ENCODE measurements at regions of chr12 and their contacts with region 1.

Region 1: GRCh38 chr12:15011162-15011561 is 38.3 kb downstream of the PDE6H start:
- DNase-seq: no peak
- ATAC-seq: no peak
- H3K4me3 ChIP-seq: no peak overlapping the region
- H3K4me3 Mint-ChIP-seq: no peak overlapping the region
- H3K27ac ChIP-seq: no peak overlapping the region
- H3K27ac Mint-ChIP-seq: no peak overlapping the region
- H3K4me1 ChIP-seq: peaks cover 3% of the 10 kb centered on the region
- H3K4me1 Mint-ChIP-seq: no peaks in the 10 kb centered on the region
- H3K27me3 ChIP-seq: peaks cover 0 to 9% of the 10 kb centered on the region in 2 experiments
- H3K27me3 Mint-ChIP-seq: peaks cover 23% of the 10 kb centered on the region
- CTCF ChIP-seq: peak; percentile 33

Region 2: GRCh38 chr12:14892726-14893505 is 118.2 kb before region 1 on chr12:
- CTCF ChIA-PET with region 1: no interaction called
- POLR2A ChIA-PET with region 1: no interaction called
- intact Hi-C with region 1: no loop called
- DNase-seq: no peak
- ATAC-seq: no peak
- H3K4me3 ChIP-seq: no peak overlapping the region
- H3K4me3 Mint-ChIP-seq: no peak overlapping the region
- H3K27ac ChIP-seq: no peak overlapping the region
- H3K27ac Mint-ChIP-seq: no peak overlapping the region
- H3K4me1 ChIP-seq: no peaks in the 10 kb centered on the region
- H3K4me1 Mint-ChIP-seq: no peaks in the 10 kb centered on the region
- H3K27me3 ChIP-seq: no peaks in the 10 kb centered on the region
- H3K27me3 Mint-ChIP-seq: no peaks in the 10 kb centered on the region
- CTCF ChIP-seq: no peak

Region 3: GRCh38 chr12:15216036-15216794 is 205.1 kb after region 1 on chr12:
- CTCF ChIA-PET with region 1: no interaction called
- POLR2A ChIA-PET with region 1: interaction called, 3 read pairs
- intact Hi-C with region 1: loop called in 1 of 2 experiments (anchors 5 kb)
- DNase-seq: no peak
- ATAC-seq: no peak
- H3K4me3 ChIP-seq: no peak overlapping the region
- H3K4me3 Mint-ChIP-seq: no peak overlapping the region
- H3K27ac ChIP-seq: no peak overlapping the region
- H3K27ac Mint-ChIP-seq: no peak overlapping the region
- H3K4me1 ChIP-seq: peaks cover 5% of the 10 kb centered on the region
- H3K4me1 Mint-ChIP-seq: no peaks in the 10 kb centered on the region
- H3K27me3 ChIP-seq: peaks cover 0 to 4% of the 10 kb centered on the region in 2 experiments
- H3K27me3 Mint-ChIP-seq: peaks cover 16% of the 10 kb centered on the region
- CTCF ChIP-seq: no peak

Region 4: DNA sequence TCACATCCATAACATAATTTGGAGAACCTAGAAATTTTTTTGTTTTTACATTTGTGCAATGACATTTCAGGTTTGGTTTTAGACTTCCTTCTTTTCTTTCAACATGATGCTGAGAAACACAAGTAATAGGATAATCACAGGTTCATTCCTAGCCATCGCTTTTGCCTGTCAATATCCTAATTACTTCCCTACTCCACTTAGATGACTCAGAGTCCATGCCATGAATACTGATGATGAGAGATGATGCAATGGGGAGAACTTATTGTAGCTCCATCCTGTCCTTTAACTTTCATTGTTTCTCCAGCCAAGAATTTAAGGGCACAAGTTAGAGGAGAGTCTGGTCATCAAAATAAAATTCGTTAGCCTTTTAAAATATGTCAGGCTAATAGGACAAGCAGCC is 412.5 kb after region 1 on chr12:
- CTCF ChIA-PET with region 1: no interaction called
- POLR2A ChIA-PET with region 1: no interaction called
- intact Hi-C with region 1: no loop called
- DNase-seq: no peak
- ATAC-seq: no peak
- H3K4me3 ChIP-seq: no peak overlapping the region
- H3K4me3 Mint-ChIP-seq: no peak overlapping the region
- H3K27ac ChIP-seq: no peak overlapping the region
- H3K27ac Mint-ChIP-seq: no peak overlapping the region
- H3K4me1 ChIP-seq: no peaks in the 10 kb centered on the region
- H3K4me1 Mint-ChIP-seq: no peaks in the 10 kb centered on the region
- H3K27me3 ChIP-seq: no peaks in the 10 kb centered on the region
- H3K27me3 Mint-ChIP-seq: peaks cover 14% of the 10 kb centered on the region
- CTCF ChIP-seq: no peak